GM18951 (cell line): ENCODE measurements at regions of chr12 and their contacts with region 1.

Region 1: DNA sequence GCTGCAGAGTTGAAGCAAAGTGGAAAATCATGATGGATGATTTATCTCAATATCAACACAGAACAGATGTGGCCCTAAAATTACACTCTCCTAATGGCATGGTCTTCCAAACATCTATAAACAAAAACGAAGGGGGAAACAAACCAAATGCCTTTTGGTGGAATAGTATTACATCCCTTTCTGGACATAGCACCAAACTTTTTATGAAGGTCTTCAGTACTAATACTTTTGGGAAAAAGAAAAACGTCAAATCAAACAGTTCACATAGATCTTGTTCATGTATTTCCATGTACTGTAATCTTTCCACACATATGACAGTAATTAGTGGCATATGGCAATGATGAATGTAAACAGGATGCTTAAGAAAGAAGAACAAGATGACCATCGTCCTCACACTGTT is 22.9 kb upstream of the ANAPC7 start:
- POLR2A ChIP-seq: no peak

Region 2: GRCh38 chr12:110088936-110089335 is 337.5 kb before region 1 on chr12:
- in situ Hi-C with region 1: loop called (anchors 5 kb)
- POLR2A ChIP-seq: no peak

Region 3: GRCh38 chr12:110575326-110575725 is 148.9 kb after region 1 on chr12:
- in situ Hi-C with region 1: no loop called
- POLR2A ChIP-seq: no peak